ENCODE measurements at regions of chr17 and their contacts with region 1.

Region 1: GRCh38 chr17:76523084-76524037 is 14.1 kb downstream of the CYGB start:
- DNase-seq: peak; percentile 88
- H3K4me3 Mint-ChIP-seq: no peak overlapping the region
- H3K27ac Mint-ChIP-seq: no peak overlapping the region
- H3K4me1 Mint-ChIP-seq: peaks cover 17% of the 10 kb centered on the region
- H3K27me3 Mint-ChIP-seq: peaks cover 2% of the 10 kb centered on the region

Region 2: DNA sequence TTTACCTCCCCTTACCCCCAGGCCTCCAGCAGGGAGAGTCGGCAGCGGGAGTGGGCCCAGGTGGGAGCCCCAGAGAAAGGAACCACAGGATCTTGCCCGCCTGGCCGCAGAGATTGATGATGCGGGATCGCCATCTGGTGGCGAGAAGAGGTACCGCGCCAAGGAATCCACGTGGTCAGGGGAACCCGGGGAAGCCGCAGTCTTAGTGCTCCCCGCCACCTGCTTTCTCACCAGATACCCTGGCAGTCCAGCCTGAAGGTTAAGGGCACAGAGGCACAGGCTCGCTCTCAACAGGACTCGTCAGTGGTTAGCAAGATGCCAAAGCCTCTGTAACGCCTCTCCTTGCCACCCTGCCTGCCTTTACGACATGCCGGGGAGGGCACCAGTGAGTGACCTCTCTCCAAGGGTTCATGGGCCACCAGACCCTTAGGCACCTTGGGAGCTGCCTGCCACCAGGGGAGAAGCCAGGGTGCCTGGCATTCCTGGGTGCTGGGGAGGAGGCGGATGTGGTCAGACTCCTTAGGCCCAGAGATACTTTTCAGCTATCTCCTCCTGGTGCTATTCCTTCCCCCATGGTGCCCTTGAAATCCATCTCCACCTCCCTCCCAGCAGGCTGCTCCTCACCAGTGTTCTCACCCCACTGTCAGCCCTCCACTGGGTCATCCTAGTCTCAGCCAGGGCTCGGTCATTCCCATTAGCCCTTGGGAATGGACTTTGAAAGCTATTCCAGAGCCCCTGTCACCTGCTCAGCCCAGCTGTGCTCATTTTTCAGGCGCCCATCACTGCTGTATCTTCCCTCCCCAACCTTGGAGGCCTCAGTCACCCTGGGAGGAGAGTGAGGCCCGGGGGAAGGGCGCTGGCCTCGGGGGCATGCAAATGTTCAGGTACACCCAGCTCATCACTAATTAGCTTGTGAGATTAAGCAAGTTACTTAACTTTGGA is 16.7 kb before region 1 on chr17:
- CTCF ChIA-PET with region 1: interaction called, 16 read pairs
- POLR2A ChIA-PET with region 1: no interaction called
- intact Hi-C with region 1: no loop called
- DNase-seq: peak; percentile 93
- H3K4me3 Mint-ChIP-seq: no peak overlapping the region
- H3K27ac Mint-ChIP-seq: no peak overlapping the region
- H3K4me1 Mint-ChIP-seq: peaks cover 12% of the 10 kb centered on the region
- H3K27me3 Mint-ChIP-seq: no peaks in the 10 kb centered on the region

Region 3: DNA sequence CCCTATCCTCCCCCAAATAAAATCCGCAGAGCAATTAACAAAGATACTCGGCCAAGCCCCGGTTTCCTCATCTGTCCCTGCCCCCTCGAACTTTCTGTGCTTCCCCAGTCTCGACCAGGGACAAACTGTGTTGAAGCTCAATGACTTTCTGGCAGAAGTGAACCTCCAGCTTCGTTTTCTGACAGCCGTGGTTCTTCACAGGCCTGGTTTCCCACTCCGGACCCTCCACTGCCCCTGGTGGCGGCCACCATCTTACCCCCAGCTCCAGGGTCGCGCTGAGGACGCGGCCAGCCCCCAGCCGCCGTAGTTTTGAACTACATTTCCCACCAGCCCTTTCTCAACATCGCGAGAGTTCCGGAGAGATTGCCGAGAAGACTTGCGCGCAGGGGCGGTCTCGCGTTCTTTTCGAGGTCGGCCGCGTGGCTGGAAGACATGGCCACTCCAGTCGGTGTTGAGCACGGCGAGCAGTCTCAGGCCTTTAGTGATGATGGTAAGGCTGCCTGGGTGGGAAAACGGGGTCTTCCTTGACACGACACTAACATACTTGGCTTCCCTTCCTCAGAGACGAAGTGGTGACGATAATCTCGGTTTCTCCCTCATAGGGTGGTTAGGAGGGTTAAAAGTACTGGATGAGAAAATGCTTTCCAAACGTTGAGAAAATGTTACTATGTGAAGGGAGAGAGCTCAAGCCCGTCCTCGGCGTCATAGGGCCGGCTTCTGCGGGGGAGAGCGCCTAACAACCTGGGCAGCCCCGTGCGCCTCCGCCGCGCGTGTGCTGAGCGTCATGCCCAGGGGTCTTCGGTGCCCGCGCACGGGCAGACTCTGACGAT is 34.2 kb after region 1 on chr17:
- CTCF ChIA-PET with region 1: interaction called, 33 read pairs
- POLR2A ChIA-PET with region 1: interaction called, 3 read pairs
- intact Hi-C with region 1: no loop called
- DNase-seq: peak; percentile 96
- H3K4me3 Mint-ChIP-seq: peak overlapping the region; percentile 97
- H3K27ac Mint-ChIP-seq: peak overlapping the region; percentile 99
- H3K4me1 Mint-ChIP-seq: peaks cover 48% of the 10 kb centered on the region
- H3K27me3 Mint-ChIP-seq: no peaks in the 10 kb centered on the region

Region 4: DNA sequence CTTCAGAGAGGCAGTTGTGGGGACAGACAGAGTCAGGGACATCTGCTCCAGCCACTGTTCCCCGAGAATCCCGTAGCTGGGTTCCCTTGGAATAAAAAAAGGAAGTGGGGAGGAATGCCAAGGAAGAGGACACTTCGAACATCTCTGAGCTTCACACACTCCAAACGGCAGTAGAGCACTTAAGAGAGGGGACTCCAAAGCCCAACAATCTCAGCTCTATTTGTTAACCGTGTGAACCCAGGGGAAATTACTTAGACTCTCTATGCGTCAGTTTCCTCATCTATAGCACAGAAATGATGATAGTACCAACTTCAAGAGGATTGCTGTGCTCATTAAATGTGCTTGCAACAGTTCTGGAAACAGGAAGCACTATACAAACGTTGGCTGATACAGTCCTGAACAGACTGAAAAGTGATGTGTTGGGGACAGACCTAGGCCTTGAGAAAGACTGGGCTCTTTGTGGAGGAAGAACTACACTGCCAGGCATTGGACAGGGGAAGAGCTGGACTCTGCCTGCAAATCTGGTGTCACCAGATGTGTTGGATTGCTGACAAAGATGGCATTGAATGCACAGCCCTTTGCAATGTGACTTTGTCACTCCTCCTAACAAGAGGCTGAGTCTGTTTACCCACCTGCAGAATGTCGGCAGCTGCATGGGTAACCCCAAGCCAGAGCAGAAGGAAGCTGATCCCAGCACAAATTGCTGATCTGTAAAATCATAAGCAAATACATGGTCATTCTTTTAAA is 74.5 kb after region 1 on chr17:
- CTCF ChIA-PET with region 1: interaction called, 12 read pairs
- POLR2A ChIA-PET with region 1: no interaction called
- intact Hi-C with region 1: no loop called
- DNase-seq: no peak
- H3K4me3 Mint-ChIP-seq: no peak overlapping the region
- H3K27ac Mint-ChIP-seq: no peak overlapping the region
- H3K4me1 Mint-ChIP-seq: peaks cover 15% of the 10 kb centered on the region
- H3K27me3 Mint-ChIP-seq: peaks cover 6% of the 10 kb centered on the region

Region 5: GRCh38 chr17:76681222-76682137 is 158.1 kb after region 1 on chr17:
- CTCF ChIA-PET with region 1: interaction called, 42 read pairs
- POLR2A ChIA-PET with region 1: no interaction called
- intact Hi-C with region 1: no loop called
- DNase-seq: peak; percentile 80
- H3K4me3 Mint-ChIP-seq: no peak overlapping the region
- H3K27ac Mint-ChIP-seq: no peak overlapping the region
- H3K4me1 Mint-ChIP-seq: peaks cover 3% of the 10 kb centered on the region
- H3K27me3 Mint-ChIP-seq: no peaks in the 10 kb centered on the region